Endothelial cell of umbilical vein (primary cell): ENCODE measurements at regions of chr12 and their contacts with region 1.

Region 1: GRCh38 chr12:121668750-121669520 is 519 bp downstream of the MORN3 start:
- DNase-seq: peak; percentile 24
- H3K4me3 ChIP-seq: no peak overlapping the region
- H3K27ac ChIP-seq: no peak overlapping the region
- H3K4me1 ChIP-seq: peaks cover 8% of the 10 kb centered on the region
- H3K27me3 ChIP-seq: no peaks in the 10 kb centered on the region
- CTCF ChIP-seq: peak; percentile 62 to 75
- POLR2A ChIP-seq: no peak

Region 2: GRCh38 chr12:121190523-121191031 is 478.4 kb before region 1 on chr12:
- CTCF ChIA-PET with region 1: no interaction called
- POLR2A ChIA-PET with region 1: no interaction called
- dilution Hi-C with region 1: no loop called
- intact Hi-C with region 1: no loop called
- DNase-seq: peak; percentile 85
- H3K4me3 ChIP-seq: no peak overlapping the region
- H3K27ac ChIP-seq: peak overlapping the region; percentile 92
- H3K4me1 ChIP-seq: peaks cover 51% of the 10 kb centered on the region
- H3K27me3 ChIP-seq: no peaks in the 10 kb centered on the region
- CTCF ChIP-seq: no peak
- POLR2A ChIP-seq: no peak

Region 3: DNA sequence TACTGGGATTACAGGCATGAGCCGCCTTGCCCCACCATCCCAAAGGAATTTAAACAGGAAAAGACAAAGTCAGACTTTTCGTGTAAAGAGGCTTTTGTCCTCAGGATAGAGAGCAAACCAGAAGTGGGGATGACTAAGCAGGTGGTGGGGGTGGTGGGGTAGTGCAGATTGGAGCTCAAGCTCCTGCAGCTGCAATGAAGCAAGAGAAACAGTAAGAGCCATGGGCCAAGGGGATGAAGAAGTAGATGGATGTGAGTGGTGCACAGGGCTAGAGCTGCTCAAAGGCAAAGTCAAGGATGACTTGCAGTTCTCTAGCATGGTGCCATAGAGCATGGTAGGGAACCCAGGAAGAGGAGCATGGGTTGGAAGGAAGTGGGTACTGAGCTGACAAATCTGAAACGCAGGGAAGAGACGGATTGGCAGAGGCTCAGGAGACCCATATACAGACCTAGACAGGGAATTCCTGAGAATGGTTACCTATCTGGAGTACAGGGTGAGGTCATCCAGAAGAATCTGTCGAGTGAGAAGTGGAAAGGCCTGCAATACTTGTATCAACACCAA is 280.4 kb before region 1 on chr12:
- CTCF ChIA-PET with region 1: no interaction called
- POLR2A ChIA-PET with region 1: no interaction called
- dilution Hi-C with region 1: no loop called
- intact Hi-C with region 1: no loop called
- DNase-seq: peak; percentile 38
- H3K4me3 ChIP-seq: no peak overlapping the region
- H3K27ac ChIP-seq: no peak overlapping the region
- H3K4me1 ChIP-seq: peaks cover 6% of the 10 kb centered on the region
- H3K27me3 ChIP-seq: no peaks in the 10 kb centered on the region
- CTCF ChIP-seq: no peak
- POLR2A ChIP-seq: no peak

Region 4: DNA sequence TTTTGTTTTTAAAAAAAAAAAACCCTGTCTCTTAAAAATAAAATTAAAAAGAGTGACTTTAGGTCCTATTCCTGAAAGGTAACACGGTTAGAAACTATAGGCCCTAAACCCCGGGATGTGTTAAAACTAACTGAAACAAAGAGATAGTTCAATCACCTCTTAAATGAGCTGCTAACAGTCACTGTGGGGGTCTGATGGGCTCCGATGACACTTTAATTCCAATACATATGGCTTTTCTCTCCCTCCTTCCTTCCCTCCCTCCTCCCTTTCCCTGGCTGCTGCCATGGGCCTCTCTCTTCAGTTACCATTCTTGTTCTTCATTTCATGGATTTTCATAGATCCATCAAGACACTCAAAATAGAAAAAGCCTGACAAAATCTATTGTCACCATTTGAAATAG is 192.5 kb before region 1 on chr12:
- CTCF ChIA-PET with region 1: interaction called, 12 read pairs
- POLR2A ChIA-PET with region 1: no interaction called
- dilution Hi-C with region 1: no loop called
- intact Hi-C with region 1: no loop called
- DNase-seq: no peak
- H3K4me3 ChIP-seq: no peak overlapping the region
- H3K27ac ChIP-seq: no peak overlapping the region
- H3K4me1 ChIP-seq: no peaks in the 10 kb centered on the region
- H3K27me3 ChIP-seq: no peaks in the 10 kb centered on the region
- CTCF ChIP-seq: no peak
- POLR2A ChIP-seq: no peak

Region 5: GRCh38 chr12:121536899-121537813 is 131.8 kb before region 1 on chr12:
- CTCF ChIA-PET with region 1: interaction called, 13 read pairs
- POLR2A ChIA-PET with region 1: no interaction called
- dilution Hi-C with region 1: no loop called
- intact Hi-C with region 1: no loop called
- DNase-seq: peak; percentile 74
- H3K4me3 ChIP-seq: peak overlapping the region; percentile 38 to 63 (median 56)
- H3K27ac ChIP-seq: peak overlapping the region; percentile 20
- H3K4me1 ChIP-seq: peaks cover 20% of the 10 kb centered on the region
- H3K27me3 ChIP-seq: no peaks in the 10 kb centered on the region
- CTCF ChIP-seq: no peak
- POLR2A ChIP-seq: no peak

Region 6: GRCh38 chr12:121568971-121569751 is 99.8 kb before region 1 on chr12:
- CTCF ChIA-PET with region 1: interaction called, 11 read pairs
- POLR2A ChIA-PET with region 1: no interaction called
- dilution Hi-C with region 1: no loop called
- intact Hi-C with region 1: no loop called
- DNase-seq: no peak
- H3K4me3 ChIP-seq: no peak overlapping the region
- H3K27ac ChIP-seq: no peak overlapping the region
- H3K4me1 ChIP-seq: no peaks in the 10 kb centered on the region
- H3K27me3 ChIP-seq: no peaks in the 10 kb centered on the region
- CTCF ChIP-seq: no peak
- POLR2A ChIP-seq: no peak

Region 7: DNA sequence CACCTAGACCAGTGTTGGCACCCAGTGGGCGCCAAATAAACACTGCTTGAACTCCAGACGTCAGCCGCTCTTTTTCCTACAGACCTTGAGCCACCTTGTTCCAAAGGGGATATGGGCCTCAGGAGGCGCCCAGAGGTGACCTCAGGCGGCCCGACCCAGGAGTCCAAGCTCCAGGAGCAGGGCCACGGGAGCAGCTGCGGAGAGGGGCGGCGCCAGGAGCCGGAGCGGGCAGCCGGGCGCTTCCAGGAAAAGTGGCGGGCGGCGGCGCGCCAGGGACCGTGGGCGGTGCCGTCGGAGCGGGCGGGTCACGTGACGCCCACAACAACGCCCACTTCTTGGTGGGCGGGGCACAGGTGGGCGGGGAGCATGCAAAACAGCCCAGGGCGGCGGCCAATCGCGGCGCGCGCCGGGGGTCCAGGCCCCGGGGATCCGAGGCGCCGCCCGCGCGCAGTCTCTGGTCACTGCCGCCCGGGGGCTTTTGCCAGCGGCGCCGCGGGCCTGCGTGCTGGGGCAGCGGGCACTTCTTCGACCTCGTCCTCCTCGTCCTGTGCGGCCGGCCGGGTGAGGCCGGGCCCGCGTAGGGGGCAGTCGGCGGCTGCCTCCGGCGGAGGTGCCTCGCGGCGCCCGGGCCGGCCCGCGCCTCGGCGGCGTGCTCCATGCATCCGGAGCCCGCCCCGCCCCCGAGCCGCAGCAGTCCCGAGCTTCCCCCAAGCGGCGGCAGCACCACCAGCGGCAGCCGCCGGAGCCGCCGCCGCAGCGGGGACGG is 42.7 kb before region 1 on chr12 and contains the start of gene ORAI1:
- CTCF ChIA-PET with region 1: interaction called, 105 read pairs
- POLR2A ChIA-PET with region 1: interaction called, 5 read pairs
- dilution Hi-C with region 1: no loop called
- intact Hi-C with region 1: loop called (anchors 1 kb)
- DNase-seq: peak; percentile 94
- H3K4me3 ChIP-seq: peak within 1 kb of the TSS; percentile 47 to 67 (median 55)
- H3K27ac ChIP-seq: peak within 1 kb of the TSS; percentile 77
- H3K4me1 ChIP-seq: peaks cover 43% of the 10 kb centered on the region
- H3K27me3 ChIP-seq: no peaks in the 10 kb centered on the region
- CTCF ChIP-seq: no peak
- POLR2A ChIP-seq: peak; percentile 92
- total RNA-seq, gene ORAI1: 29.0 and 30.5 TPM in 2 replicates

Region 8: DNA sequence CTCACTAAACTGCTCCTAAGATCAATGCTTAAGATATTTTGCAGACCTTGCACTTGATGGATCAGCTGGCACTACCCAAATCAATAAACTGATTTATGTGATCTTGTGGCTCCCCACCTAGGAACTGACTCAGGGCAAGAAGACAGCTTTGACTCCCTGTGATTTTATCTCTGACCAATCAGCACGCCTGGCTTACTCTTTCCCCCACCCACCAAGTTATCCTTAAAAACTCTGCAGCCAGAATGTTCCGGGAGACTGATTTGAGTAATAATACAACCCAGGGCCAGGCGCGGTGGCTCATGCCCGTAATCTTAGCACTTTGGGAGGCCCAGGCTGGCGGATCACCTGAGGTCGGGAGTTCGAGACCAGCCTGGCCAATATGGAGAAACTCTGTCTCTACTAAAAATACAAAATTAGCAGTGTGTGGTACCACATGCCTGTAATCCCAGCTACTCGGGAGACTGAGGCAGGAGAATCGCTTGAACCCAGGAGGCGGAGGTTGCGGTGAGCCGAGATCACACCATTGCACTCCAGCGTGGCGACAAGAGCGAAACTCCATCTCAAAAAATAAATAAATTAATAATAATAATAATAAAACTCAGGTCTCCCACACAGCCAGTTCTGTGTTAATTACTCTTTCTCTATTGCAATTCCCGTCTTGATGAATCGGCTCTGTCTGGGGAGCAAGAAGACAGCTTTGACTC is 11.5 kb before region 1 on chr12:
- CTCF ChIA-PET with region 1: interaction called, 21 read pairs
- POLR2A ChIA-PET with region 1: no interaction called
- dilution Hi-C with region 1: no loop called
- intact Hi-C with region 1: no loop called
- DNase-seq: no peak
- H3K4me3 ChIP-seq: no peak overlapping the region
- H3K27ac ChIP-seq: no peak overlapping the region
- H3K4me1 ChIP-seq: peaks cover 12% of the 10 kb centered on the region
- H3K27me3 ChIP-seq: no peaks in the 10 kb centered on the region
- CTCF ChIP-seq: no peak
- POLR2A ChIP-seq: no peak

Region 9: DNA sequence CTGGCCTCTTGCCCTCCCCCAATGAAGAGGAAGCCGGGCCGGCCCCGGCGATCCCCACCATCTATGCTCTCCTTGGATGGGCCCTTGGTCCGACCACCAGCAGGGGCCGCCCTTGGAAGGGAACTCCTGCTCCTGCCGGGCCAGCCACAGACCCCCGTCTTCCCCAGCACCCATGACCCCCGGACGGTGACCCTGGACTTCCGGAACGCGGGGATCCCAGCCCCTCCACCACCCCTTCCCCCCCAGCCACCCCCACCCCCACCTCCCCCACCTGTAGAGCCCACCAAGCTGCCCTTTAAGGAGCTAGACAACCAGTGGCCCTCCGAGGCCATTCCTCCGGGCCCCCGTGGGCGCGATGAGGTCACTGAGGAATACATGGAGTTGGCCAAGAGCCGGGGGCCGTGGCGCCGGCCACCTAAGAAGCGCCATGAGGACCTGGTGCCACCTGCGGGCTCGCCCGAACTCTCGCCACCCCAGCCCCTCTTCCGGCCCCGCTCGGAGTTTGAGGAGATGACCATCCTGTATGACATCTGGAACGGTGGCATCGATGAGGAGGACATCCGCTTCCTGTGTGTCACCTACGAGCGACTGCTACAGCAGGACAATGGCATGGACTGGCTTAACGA is 154.3 kb after region 1 on chr12:
- CTCF ChIA-PET with region 1: no interaction called
- POLR2A ChIA-PET with region 1: no interaction called
- dilution Hi-C with region 1: no loop called
- intact Hi-C with region 1: no loop called
- DNase-seq: no peak
- H3K4me3 ChIP-seq: no peak overlapping the region
- H3K27ac ChIP-seq: no peak overlapping the region
- H3K4me1 ChIP-seq: no peaks in the 10 kb centered on the region
- H3K27me3 ChIP-seq: no peaks in the 10 kb centered on the region
- CTCF ChIP-seq: peak in 1 of 2 donors; percentile 3
- POLR2A ChIP-seq: no peak

Region 10: DNA sequence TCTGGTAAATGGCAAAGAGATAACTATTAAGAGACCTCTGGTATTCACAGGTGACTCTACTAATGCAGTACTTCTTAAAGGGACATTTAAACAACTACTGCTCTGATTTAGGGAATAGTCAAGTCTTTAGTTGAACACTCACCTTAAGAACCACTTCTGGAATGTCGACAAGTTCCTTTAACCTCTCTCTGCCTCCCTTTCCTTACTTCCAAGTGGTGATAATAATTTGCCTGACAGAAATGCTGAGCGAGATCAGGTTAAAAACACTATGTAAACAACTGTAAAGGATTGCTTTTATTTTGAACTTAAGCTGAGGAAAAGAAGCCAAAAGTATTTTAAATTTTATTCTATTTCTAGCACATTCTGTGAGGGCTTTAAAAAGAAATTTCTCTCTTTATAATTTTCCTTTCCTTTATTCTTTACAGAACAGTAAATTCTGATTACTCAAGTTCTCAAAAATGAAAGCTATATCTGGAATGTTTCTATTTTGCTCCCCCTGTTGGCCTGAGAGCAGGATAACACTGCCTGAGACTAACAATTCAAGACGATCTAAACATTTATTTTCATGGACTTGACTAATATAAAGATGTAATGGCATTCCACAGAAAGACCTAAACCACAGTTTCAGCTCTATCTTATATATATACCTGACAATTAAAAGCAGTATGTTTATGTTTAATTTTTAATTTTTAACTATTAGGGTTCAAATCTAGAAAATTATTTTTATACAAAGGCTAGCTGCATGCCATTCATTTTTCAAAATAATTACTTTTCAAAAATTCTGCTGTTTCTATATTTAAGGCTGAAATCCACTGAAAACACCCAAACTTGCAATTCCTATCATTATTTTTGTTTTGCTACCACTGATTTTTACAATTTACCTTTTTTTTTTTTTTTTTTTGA is 802.6 kb after region 1 on chr12:
- CTCF ChIA-PET with region 1: no interaction called
- POLR2A ChIA-PET with region 1: no interaction called
- dilution Hi-C with region 1: no loop called
- intact Hi-C with region 1: no loop called
- DNase-seq: peak; percentile 80
- H3K4me3 ChIP-seq: no peak overlapping the region
- H3K27ac ChIP-seq: peak overlapping the region; percentile 35
- H3K4me1 ChIP-seq: peaks cover 3% of the 10 kb centered on the region
- H3K27me3 ChIP-seq: no peaks in the 10 kb centered on the region
- CTCF ChIP-seq: peak; percentile 46 to 62
- POLR2A ChIP-seq: no peak